ENCODE measurements at regions of chrX and their contacts with region 1.

Region 1: GRCh38 chrX:132001127-132001526 is 22.0 kb upstream of the STK26 start:
- DNase-seq: peak; percentile 60
- H3K4me3 Mint-ChIP-seq: no peak overlapping the region
- H3K27ac Mint-ChIP-seq: no peak overlapping the region
- H3K4me1 Mint-ChIP-seq: peaks cover 26% of the 10 kb centered on the region
- H3K27me3 Mint-ChIP-seq: no peaks in the 10 kb centered on the region

Region 2: GRCh38 chrX:131609480-131609879 is 391.6 kb before region 1 on chrX:
- CTCF ChIA-PET with region 1: no interaction called
- intact Hi-C with region 1: no loop called
- DNase-seq: no peak
- H3K4me3 Mint-ChIP-seq: no peak overlapping the region
- H3K27ac Mint-ChIP-seq: no peak overlapping the region
- H3K4me1 Mint-ChIP-seq: no peaks in the 10 kb centered on the region
- H3K27me3 Mint-ChIP-seq: peaks cover 12% of the 10 kb centered on the region

Region 3: DNA sequence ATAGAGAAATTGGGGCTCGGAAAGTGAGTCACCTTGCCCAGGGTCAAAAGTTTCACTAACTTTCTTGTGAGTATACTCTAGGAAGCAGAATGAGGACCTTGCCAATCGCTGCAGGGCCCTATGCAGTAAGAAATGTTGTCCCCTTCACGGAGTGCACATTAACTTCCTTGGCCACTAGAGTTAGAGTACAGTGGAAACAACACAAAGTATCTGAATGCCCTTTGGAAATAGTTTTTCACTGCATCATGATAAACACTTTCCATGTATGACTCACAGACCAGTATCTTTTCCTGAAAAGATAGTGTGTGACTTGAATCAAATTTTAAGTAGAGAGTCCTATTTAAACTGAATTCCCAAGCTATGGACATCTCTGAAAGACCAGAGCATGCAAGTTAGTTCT is 23.5 kb before region 1 on chrX:
- CTCF ChIA-PET with region 1: no interaction called
- intact Hi-C with region 1: no loop called
- DNase-seq: no peak
- H3K4me3 Mint-ChIP-seq: no peak overlapping the region
- H3K27ac Mint-ChIP-seq: no peak overlapping the region
- H3K4me1 Mint-ChIP-seq: peaks cover 25% of the 10 kb centered on the region
- H3K27me3 Mint-ChIP-seq: no peaks in the 10 kb centered on the region

Region 4: GRCh38 chrX:132017431-132018185 is 16.5 kb after region 1 on chrX:
- CTCF ChIA-PET with region 1: interaction called, 3 read pairs
- intact Hi-C with region 1: loop called (anchors 2 kb)
- DNase-seq: no peak
- H3K4me3 Mint-ChIP-seq: no peak overlapping the region
- H3K27ac Mint-ChIP-seq: peak overlapping the region; percentile 42
- H3K4me1 Mint-ChIP-seq: peaks cover 35% of the 10 kb centered on the region
- H3K27me3 Mint-ChIP-seq: no peaks in the 10 kb centered on the region

Region 5: GRCh38 chrX:132059973-132060540 is 58.9 kb after region 1 on chrX:
- CTCF ChIA-PET with region 1: no interaction called
- intact Hi-C with region 1: loop called (anchors 2 kb)
- DNase-seq: no peak
- H3K4me3 Mint-ChIP-seq: no peak overlapping the region
- H3K27ac Mint-ChIP-seq: no peak overlapping the region
- H3K4me1 Mint-ChIP-seq: peaks cover 16% of the 10 kb centered on the region
- H3K27me3 Mint-ChIP-seq: no peaks in the 10 kb centered on the region